ENCODE measurements at regions of chr1 and their contacts with region 1.

Region 1: GRCh38 chr1:27395441-27396195 is 3.2 kb downstream of the GPR3 start:
- DNase-seq: peak; percentile 70 to 87 (median 82)
- ATAC-seq: peak; percentile 40 to 50
- H3K4me3 Mint-ChIP-seq: peak overlapping the region in 4 of 10 donors; percentile 2 to 52 (median 32)
- H3K27ac Mint-ChIP-seq: peak overlapping the region in 6 of 10 donors; percentile 37 to 80 (median 55)
- H3K4me1 Mint-ChIP-seq: peaks cover 17 to 35% (median 21%) of the 10 kb centered on the region in 4 donors
- H3K27me3 Mint-ChIP-seq: peaks cover 0 to 3% (median 0%) of the 10 kb centered on the region in 5 donors

Region 2: DNA sequence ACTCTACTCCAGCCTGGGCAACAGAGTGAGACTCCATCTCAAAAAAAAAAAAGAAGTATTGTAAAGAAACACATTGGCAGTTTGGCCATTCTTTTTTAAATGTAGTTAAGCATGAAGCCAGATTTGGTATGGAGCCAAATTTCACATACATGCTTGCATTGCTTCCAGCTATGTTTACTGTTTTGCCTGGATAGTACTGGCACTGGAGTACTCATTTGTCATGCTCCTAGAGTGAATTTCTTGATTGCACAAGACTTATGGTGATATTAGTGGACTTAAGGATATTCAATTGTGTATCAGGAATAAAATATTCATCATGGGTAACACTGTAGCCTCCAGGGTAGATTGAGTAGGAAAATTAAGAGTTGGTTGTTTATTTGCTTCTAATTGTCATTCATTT is 216.2 kb before region 1 on chr1:
- POLR2A ChIA-PET with region 1: no interaction called
- DNase-seq: no peak
- ATAC-seq: no peak
- H3K4me3 Mint-ChIP-seq: no peak overlapping the region
- H3K27ac Mint-ChIP-seq: no peak overlapping the region
- H3K4me1 Mint-ChIP-seq: no peaks in the 10 kb centered on the region
- H3K27me3 Mint-ChIP-seq: no peaks in the 10 kb centered on the region

Region 3: GRCh38 chr1:27300341-27301051 is 95.1 kb before region 1 on chr1:
- POLR2A ChIA-PET with region 1: interaction called, 65 read pairs
- DNase-seq: peak; percentile 66 to 86 (median 78)
- ATAC-seq: peak; percentile 91 to 95
- H3K4me3 Mint-ChIP-seq: no peak overlapping the region
- H3K27ac Mint-ChIP-seq: peak overlapping the region in 1 of 10 donors; percentile 65
- H3K4me1 Mint-ChIP-seq: peaks cover 3 to 13% (median 5%) of the 10 kb centered on the region in 4 donors
- H3K27me3 Mint-ChIP-seq: no peaks in the 10 kb centered on the region

Region 4: GRCh38 chr1:27380766-27381733 is 14.6 kb before region 1 on chr1:
- POLR2A ChIA-PET with region 1: no interaction called
- DNase-seq: no peak
- ATAC-seq: no peak
- H3K4me3 Mint-ChIP-seq: no peak overlapping the region
- H3K27ac Mint-ChIP-seq: peak overlapping the region in 1 of 10 donors; percentile 89
- H3K4me1 Mint-ChIP-seq: peaks cover 0 to 5% (median 0%) of the 10 kb centered on the region in 4 donors
- H3K27me3 Mint-ChIP-seq: peaks cover 0 to 5% (median 3%) of the 10 kb centered on the region in 5 donors

Region 5: GRCh38 chr1:27469334-27469733 is 73.7 kb after region 1 on chr1:
- POLR2A ChIA-PET with region 1: no interaction called
- DNase-seq: no peak
- ATAC-seq: no peak
- H3K4me3 Mint-ChIP-seq: peak overlapping the region in 5 of 10 donors; percentile 3 to 43 (median 18)
- H3K27ac Mint-ChIP-seq: peak overlapping the region; percentile 23 to 84 (median 61)
- H3K4me1 Mint-ChIP-seq: peaks cover 39 to 84% (median 74%) of the 10 kb centered on the region in 4 donors
- H3K27me3 Mint-ChIP-seq: no peaks in the 10 kb centered on the region

Measured in naive thymus-derived CD8-positive, alpha-beta T cell (primary cell).